Activated naive CD8-positive, alpha-beta T cell treated with anti-CD3 and anti-CD28 coated beads, Interleukin-2, amount 10 ng/mL, durations not matched to agents 7 days and 5 days (primary cell): ENCODE measurements at regions of chr12 and their contacts with region 1.

Region 1: GRCh38 chr12:122980183-122981046 is at the start of gene ARL6IP4:
- DNase-seq: peak; percentile 87
- ATAC-seq: peak; percentile 78
- H3K4me3 Mint-ChIP-seq: peak within 1 kb of the TSS; percentile 93
- H3K27ac Mint-ChIP-seq: peak within 1 kb of the TSS; percentile 88
- H3K4me1 Mint-ChIP-seq: peaks cover 42% of the 10 kb centered on the region
- H3K27me3 Mint-ChIP-seq: no peaks in the 10 kb centered on the region
- total RNA-seq, gene ARL6IP4: 204 to 211 TPM

Region 2: DNA sequence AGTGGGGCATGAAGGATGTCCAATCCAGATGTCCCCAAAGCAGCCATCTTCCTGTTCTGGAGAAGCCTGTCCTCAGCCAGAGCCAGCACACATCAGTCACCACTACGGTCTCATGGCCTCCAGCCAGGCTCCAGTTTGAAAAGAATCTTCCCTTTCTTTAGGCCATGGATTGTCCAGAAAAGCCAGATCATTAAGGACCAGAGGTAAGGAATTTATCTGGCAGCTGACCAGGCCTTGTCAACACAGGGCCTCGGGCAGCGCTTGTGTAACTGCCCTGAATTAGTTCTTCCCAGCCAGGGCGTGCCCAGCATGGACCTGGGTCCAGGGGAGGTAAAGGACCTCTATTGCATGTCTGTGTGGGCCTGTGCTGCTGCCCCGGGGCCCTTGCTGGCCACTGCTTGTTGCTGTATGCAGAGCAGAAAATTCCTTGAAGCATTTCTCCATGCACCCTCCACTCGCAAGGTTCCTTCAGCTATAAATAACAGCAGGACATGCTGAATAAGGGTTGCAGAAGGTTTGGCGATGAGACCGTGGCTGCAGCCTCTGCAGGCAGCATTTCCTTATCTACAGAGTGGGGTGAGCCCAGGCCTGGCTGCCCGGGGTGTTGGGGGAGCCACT is 62.8 kb before region 1 on chr12:
- POLR2A ChIA-PET with region 1: no interaction called
- DNase-seq: no peak
- ATAC-seq: no peak
- H3K4me3 Mint-ChIP-seq: no peak overlapping the region
- H3K27ac Mint-ChIP-seq: no peak overlapping the region
- H3K4me1 Mint-ChIP-seq: peaks cover 14% of the 10 kb centered on the region
- H3K27me3 Mint-ChIP-seq: no peaks in the 10 kb centered on the region

Region 3: GRCh38 chr12:122965851-122966722 is 14.3 kb before region 1 on chr12 and contains the start of gene ABCB9:
- POLR2A ChIA-PET with region 1: interaction called, 23 read pairs
- DNase-seq: peak; percentile 94
- ATAC-seq: peak; percentile 97
- H3K4me3 Mint-ChIP-seq: peak within 1 kb of the TSS; percentile 67
- H3K27ac Mint-ChIP-seq: no peak within 1 kb of the TSS
- H3K4me1 Mint-ChIP-seq: peaks cover 9% of the 10 kb centered on the region
- H3K27me3 Mint-ChIP-seq: no peaks in the 10 kb centered on the region
- total RNA-seq, gene ABCB9: 7.0 to 9.2 TPM

Region 4: GRCh38 chr12:123006977-123007376 is 26.6 kb after region 1 on chr12:
- POLR2A ChIA-PET with region 1: no interaction called
- DNase-seq: no peak
- ATAC-seq: no peak
- H3K4me3 Mint-ChIP-seq: no peak overlapping the region
- H3K27ac Mint-ChIP-seq: no peak overlapping the region
- H3K4me1 Mint-ChIP-seq: no peaks in the 10 kb centered on the region
- H3K27me3 Mint-ChIP-seq: no peaks in the 10 kb centered on the region